Endothelial cell of umbilical vein (primary cell): ENCODE measurements at regions of chr1 and their contacts with region 1.

Region 1: GRCh38 chr1:17125756-17126237 is 6.5 kb upstream of the PADI2 start:
- DNase-seq: peak; percentile 71
- H3K4me3 ChIP-seq: no peak overlapping the region
- H3K27ac ChIP-seq: no peak overlapping the region
- H3K4me1 ChIP-seq: peaks cover 30% of the 10 kb centered on the region
- H3K27me3 ChIP-seq: no peaks in the 10 kb centered on the region
- CTCF ChIP-seq: peak; percentile 93 to 96
- POLR2A ChIP-seq: no peak

Region 2: GRCh38 chr1:17011439-17012307 is 114.1 kb before region 1 on chr1 and contains the start of gene ATP13A2:
- CTCF ChIA-PET with region 1: no interaction called
- POLR2A ChIA-PET with region 1: no interaction called
- dilution Hi-C with region 1: no loop called
- intact Hi-C with region 1: no loop called
- DNase-seq: peak; percentile 75
- H3K4me3 ChIP-seq: peak within 1 kb of the TSS; percentile 20 to 62 (median 59)
- H3K27ac ChIP-seq: no peak within 1 kb of the TSS
- H3K4me1 ChIP-seq: peaks cover 24% of the 10 kb centered on the region
- H3K27me3 ChIP-seq: no peaks in the 10 kb centered on the region
- CTCF ChIP-seq: no peak
- POLR2A ChIP-seq: no peak
- total RNA-seq, gene ATP13A2: 44.9 and 52.3 TPM in 2 replicates

Region 3: DNA sequence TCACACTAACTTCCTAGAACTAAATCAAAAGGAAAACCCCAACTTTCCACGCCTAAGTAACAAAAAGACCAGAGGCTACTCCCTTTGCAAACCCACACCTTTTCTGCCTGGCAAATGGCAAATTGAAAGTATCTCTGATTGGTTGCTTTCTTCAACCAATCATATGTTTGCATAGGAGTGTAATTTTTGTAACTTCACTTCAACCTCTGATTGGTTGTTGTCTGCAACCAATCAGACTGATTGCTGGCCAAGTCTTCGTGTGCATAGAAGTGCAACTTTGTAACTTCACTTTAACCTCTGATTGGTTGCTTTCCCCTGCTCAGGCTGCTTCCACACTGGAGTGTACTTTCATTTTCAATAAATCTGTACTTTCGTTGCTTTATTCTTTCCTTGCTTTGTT is 30.3 kb after region 1 on chr1:
- CTCF ChIA-PET with region 1: no interaction called
- POLR2A ChIA-PET with region 1: no interaction called
- dilution Hi-C with region 1: no loop called
- intact Hi-C with region 1: loop called (anchors 2 kb)
- DNase-seq: no peak
- H3K4me3 ChIP-seq: no peak overlapping the region
- H3K27ac ChIP-seq: no peak overlapping the region
- H3K4me1 ChIP-seq: no peaks in the 10 kb centered on the region
- H3K27me3 ChIP-seq: no peaks in the 10 kb centered on the region
- CTCF ChIP-seq: no peak
- POLR2A ChIP-seq: no peak

Region 4: DNA sequence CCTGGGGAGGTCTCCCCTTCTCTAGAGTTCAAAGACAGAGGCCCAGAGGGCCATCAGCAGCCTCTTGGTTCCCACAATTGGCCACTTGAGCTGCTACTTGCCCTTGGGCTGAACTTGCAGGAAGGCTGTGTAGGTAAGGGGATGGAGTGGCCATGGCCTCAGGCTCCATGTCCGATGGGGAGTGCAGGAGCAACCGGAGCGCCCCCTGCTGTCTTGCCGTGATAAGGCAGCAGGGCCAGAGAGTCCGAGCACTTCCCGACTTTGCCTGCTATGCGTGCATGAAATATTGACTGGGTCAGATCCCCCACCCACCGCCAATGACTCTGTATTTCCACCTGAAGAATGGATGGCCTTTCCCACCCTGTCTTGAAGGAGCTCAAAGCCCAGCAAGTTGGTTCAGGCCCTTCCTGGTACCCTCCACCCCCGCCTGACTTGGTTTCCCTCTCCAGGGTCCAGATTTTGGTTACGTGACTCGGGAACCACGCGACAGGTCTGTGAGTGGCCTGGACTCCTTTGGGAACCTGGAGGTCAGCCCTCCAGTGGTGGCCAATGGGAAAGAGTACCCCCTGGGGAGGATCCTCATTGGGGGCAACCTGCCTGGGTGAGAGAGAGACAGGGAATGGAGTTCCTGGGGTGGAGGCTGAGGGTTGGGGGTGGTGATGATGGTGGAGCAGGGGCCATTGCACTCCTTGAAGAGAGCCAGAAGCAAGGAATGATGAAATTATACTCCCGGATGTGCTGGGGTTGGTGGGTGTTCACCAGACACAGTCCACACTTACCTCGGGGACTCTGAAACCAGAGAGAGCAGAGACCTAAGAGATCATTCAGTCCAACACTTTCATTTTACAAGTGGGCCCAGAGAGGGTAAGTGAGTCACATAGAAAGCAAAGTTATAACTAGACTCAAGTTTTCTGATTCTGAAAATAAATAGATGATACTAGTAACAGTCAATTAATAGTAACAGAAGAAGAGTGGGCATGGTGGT is 148.7 kb after region 1 on chr1:
- CTCF ChIA-PET with region 1: interaction called, 31 read pairs
- POLR2A ChIA-PET with region 1: no interaction called
- dilution Hi-C with region 1: no loop called
- intact Hi-C with region 1: loop called (anchors 1 kb)
- DNase-seq: peak; percentile 36
- H3K4me3 ChIP-seq: no peak overlapping the region
- H3K27ac ChIP-seq: no peak overlapping the region
- H3K4me1 ChIP-seq: no peaks in the 10 kb centered on the region
- H3K27me3 ChIP-seq: no peaks in the 10 kb centered on the region
- CTCF ChIP-seq: peak; percentile 72 to 91
- POLR2A ChIP-seq: no peak

Region 5: DNA sequence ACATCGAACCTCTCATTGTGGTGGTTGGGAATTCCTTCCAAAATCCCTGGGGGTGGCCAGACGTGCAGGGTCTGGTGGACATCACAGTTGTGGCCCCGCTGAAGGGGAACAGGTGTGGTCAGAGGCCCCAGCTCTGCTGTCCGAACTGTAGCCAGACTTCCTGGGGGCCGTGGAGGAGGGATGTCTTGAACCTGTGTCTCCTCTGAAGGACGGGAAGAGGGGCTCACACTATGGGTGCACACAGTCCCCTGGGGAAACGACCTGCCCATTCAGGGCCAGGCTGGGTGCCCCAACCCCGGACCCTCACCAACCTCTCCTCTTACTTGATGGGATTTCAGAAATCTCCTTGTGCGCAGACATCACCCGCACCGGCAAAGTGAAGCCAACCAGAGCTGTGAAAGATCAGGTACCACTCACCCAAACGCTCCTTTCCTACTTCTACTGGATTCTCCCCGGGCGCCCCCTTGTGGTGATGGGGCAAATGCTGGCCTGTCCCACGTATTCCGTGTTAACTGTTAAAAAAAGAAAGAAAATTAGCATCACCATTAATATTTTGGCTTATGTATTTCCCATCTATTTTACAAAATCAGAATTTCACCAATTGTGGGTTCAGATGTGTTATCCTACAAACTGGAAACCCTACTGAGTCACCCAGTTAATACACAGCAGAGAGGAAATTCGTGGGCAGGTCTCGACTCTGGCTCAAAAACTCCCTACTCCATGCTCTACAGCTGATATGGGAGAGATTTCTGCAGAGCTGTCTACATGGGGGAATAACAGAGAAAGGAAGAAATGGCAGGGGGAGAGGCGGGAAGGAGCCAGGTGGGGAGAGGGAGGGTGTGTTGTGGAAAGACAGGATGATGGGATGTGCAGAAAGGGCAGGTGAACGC is 210.3 kb after region 1 on chr1:
- CTCF ChIA-PET with region 1: interaction called, 34 read pairs
- POLR2A ChIA-PET with region 1: no interaction called
- dilution Hi-C with region 1: no loop called
- intact Hi-C with region 1: loop called (anchors 1 kb)
- DNase-seq: peak; percentile 33
- H3K4me3 ChIP-seq: no peak overlapping the region
- H3K27ac ChIP-seq: no peak overlapping the region
- H3K4me1 ChIP-seq: no peaks in the 10 kb centered on the region
- H3K27me3 ChIP-seq: no peaks in the 10 kb centered on the region
- CTCF ChIP-seq: peak; percentile 86 to 88
- POLR2A ChIP-seq: no peak

Region 6: GRCh38 chr1:17405898-17406759 is 280.3 kb after region 1 on chr1:
- CTCF ChIA-PET with region 1: interaction called, 12 read pairs
- POLR2A ChIA-PET with region 1: no interaction called
- dilution Hi-C with region 1: no loop called
- intact Hi-C with region 1: loop called (anchors 1 kb)
- DNase-seq: peak; percentile 44
- H3K4me3 ChIP-seq: no peak overlapping the region
- H3K27ac ChIP-seq: no peak overlapping the region
- H3K4me1 ChIP-seq: no peaks in the 10 kb centered on the region
- H3K27me3 ChIP-seq: no peaks in the 10 kb centered on the region
- CTCF ChIP-seq: peak; percentile 72 to 92
- POLR2A ChIP-seq: no peak

Region 7: DNA sequence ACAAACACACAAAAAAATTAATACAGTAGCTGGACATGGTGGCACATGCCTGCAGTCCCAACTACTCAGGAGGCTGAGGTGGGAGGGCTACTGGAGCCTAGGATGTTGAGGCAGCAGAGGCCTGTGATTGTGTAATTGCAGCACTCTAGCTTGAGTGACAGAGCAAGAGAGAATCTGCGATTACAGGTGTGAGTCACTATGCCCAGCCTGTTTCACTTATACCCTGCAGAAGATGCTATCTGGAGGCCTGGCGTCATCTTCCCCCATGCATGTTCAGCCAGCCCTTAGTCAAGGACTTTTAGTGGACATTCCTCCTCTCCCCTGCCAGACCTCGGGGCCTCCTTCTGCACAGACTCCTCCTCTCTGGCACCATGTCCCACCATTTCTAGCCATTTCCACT is 349.9 kb after region 1 on chr1:
- CTCF ChIA-PET with region 1: no interaction called
- POLR2A ChIA-PET with region 1: no interaction called
- dilution Hi-C with region 1: no loop called
- intact Hi-C with region 1: no loop called
- DNase-seq: no peak
- H3K4me3 ChIP-seq: no peak overlapping the region
- H3K27ac ChIP-seq: no peak overlapping the region
- H3K4me1 ChIP-seq: no peaks in the 10 kb centered on the region
- H3K27me3 ChIP-seq: peaks cover 0 to 2% of the 10 kb centered on the region in 2 experiments
- CTCF ChIP-seq: no peak
- POLR2A ChIP-seq: no peak